Activated B cell treated with CpG ODN at 0.5 μM for 24 hours (primary cell): ENCODE measurements at regions of chr3 and their contacts with region 1.

Region 1: DNA sequence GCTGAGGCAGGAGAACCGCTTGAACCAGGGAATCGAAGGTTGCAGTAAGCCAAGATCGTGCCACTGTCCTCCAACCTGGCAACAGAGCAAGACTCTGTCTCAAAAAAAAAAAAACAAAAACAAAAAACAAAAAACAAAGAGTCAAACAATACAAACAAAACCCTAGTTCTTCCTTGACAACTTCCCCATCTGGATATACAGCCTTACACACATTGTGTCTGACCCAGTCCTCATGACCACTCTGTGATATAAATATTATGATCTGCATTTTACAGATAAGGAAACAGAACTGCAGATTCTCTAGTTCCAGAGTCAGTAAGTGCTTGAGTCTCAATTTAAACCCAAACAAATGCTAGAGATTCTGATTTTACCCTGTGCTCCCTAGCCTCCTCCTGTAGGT is 4.8 kb upstream of the ESYT3 start:
- DNase-seq: no peak
- ATAC-seq: no peak
- H3K4me3 Mint-ChIP-seq: no peak overlapping the region
- H3K27ac Mint-ChIP-seq: no peak overlapping the region
- H3K4me1 Mint-ChIP-seq: peaks cover 11% of the 10 kb centered on the region
- H3K27me3 Mint-ChIP-seq: peaks cover 26% of the 10 kb centered on the region
- CTCF ChIP-seq: no peak

Region 2: DNA sequence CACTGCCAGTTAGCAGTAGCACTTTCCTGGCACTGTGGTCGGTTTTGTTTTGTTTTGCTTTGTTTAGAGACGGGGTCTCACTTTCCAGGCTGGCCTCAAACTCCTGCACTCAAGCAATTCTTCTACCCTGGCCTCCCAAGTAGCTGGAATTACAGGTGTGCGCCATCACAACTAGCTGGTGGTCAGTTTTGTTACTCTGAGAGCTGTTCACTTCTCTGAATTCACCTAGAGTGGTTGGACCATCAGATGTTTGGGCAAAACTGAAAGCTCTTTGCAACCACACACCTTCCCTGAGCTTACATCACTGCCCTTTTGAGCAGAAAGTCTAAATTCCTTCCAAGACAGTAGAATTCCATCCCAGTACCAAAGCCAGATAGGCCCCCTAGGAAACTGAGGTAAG is 397.1 kb before region 1 on chr3:
- CTCF ChIA-PET with region 1: no interaction called
- POLR2A ChIA-PET with region 1: no interaction called
- intact Hi-C with region 1: no loop called
- DNase-seq: no peak
- ATAC-seq: no peak
- H3K4me3 Mint-ChIP-seq: no peak overlapping the region
- H3K27ac Mint-ChIP-seq: no peak overlapping the region
- H3K4me1 Mint-ChIP-seq: no peaks in the 10 kb centered on the region
- H3K27me3 Mint-ChIP-seq: peaks cover 18% of the 10 kb centered on the region
- CTCF ChIP-seq: no peak

Region 3: DNA sequence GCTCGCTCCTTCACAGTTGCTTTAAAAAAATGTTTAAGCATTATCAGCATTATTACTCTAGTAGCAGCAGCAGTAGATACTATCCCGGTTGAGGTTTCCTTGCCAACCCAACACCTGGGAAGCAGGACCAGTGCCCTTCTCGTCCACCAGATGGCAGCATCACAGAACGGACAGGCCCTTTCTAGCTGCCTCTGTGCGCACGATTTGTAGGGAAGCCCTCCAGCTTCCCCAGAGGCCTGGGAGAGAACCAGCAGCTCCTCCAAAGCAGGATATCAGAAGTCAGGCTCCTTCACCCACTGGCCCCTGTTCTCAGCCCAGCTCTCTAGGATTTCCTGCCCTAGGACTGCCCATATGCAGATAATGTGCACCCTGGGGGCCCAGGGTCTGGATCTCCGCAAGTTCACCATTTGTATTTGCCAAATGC is 12.1 kb before region 1 on chr3:
- CTCF ChIA-PET with region 1: interaction called, 10 read pairs
- POLR2A ChIA-PET with region 1: no interaction called
- intact Hi-C with region 1: no loop called
- DNase-seq: no peak
- ATAC-seq: peak; percentile 49
- H3K4me3 Mint-ChIP-seq: no peak overlapping the region
- H3K27ac Mint-ChIP-seq: no peak overlapping the region
- H3K4me1 Mint-ChIP-seq: no peaks in the 10 kb centered on the region
- H3K27me3 Mint-ChIP-seq: peaks cover 24% of the 10 kb centered on the region
- CTCF ChIP-seq: peak; percentile 79